ENCODE measurements at regions of chrX and their contacts with region 1.

Region 1: GRCh38 chrX:16559206-16559619 is 90.7 kb upstream of the S100G start:
- DNase-seq: no peak
- H3K4me3 ChIP-seq: no peak overlapping the region
- H3K27ac ChIP-seq: no peak overlapping the region
- H3K27me3 ChIP-seq: no peaks in the 10 kb centered on the region
- CTCF ChIP-seq: no peak

Region 2: DNA sequence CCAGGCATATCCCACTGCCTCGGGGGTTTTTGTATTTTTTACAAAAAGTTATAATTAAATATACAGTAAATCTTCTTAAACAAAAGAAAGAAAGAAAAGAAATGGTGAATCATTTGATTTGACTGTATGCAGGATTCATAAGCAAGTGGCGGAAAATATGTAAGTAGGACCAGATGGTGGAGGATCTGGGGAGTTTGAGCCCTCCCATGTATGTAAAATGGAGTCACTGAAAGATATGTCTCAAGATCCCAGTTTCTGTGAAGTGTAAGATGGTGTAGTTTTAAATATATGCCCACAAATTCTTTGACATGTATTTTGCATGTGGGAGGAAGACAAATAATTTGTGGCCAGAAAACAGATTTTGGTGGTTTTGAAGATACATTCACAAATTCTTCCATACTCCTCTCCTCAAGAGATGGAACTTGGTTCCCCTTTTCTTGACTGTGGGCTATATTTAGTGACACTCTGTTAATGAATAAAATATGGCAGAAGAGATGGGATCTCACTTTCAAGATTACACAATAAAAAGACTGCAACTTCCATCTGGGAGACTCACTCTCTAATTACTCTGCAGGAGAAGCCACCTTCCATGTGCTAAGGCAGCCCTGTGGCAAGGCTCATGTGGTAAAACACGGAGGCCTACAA is 42.9 kb before region 1 on chrX:
- CTCF ChIA-PET with region 1: interaction called, 11 read pairs
- POLR2A ChIA-PET with region 1: no interaction called
- DNase-seq: no peak
- H3K4me3 ChIP-seq: no peak overlapping the region
- H3K27ac ChIP-seq: no peak overlapping the region
- H3K27me3 ChIP-seq: no peaks in the 10 kb centered on the region
- CTCF ChIP-seq: no peak

Region 3: GRCh38 chrX:16547691-16548265 is 11.4 kb before region 1 on chrX:
- CTCF ChIA-PET with region 1: no interaction called
- POLR2A ChIA-PET with region 1: no interaction called
- DNase-seq: no peak
- H3K4me3 ChIP-seq: no peak overlapping the region
- H3K27ac ChIP-seq: no peak overlapping the region
- H3K27me3 ChIP-seq: no peaks in the 10 kb centered on the region
- CTCF ChIP-seq: no peak

Measured in AG04450 (cell line).